H1 (cell line): ENCODE measurements at regions of chr20 and their contacts with region 1.

Region 1: DNA sequence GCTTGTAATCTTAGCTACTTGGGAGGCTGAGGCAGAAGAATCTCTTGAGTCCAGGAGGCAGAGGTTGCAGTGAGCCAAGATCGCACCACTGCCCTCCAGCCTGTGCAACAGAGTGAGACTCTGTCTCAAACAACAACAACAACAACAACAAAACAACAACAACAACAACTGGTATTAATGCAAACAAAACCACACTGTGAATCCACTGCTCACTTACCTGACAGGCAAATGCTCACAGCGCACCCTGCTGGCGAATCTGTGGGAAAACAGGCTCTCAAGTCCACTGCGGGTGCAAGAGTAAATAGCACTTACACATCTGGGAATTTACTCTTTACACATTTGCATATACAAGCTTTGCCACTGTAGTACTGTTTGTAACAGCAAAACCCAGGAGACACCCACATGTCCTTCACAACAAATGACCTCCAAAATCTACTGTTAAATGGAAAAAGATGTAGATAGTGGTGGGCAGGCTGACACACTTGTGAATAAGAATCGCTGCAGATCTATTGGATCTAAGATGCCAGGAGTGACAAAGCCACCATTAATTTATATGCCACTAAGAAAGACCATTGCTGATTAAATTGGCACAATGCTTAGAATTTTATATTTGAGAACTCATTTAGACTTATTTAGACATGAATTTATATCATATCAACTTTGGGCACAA is 29.3 kb downstream of the NSFL1C start:
- DNase-seq: peak in 1 of 2 experiments; percentile 80
- H3K4me3 ChIP-seq: no peak overlapping the region
- H3K27ac ChIP-seq: no peak overlapping the region
- H3K4me1 ChIP-seq: no peaks in the 10 kb centered on the region
- H3K27me3 ChIP-seq: no peaks in the 10 kb centered on the region
- CTCF ChIP-seq: peak; percentile 85 to 91 (median 87)
- EP300 ChIP-seq: no peak
- POLR2A ChIP-seq: no peak
- RAD21 ChIP-seq: peak; percentile 83 to 84

Region 2: GRCh38 chr20:1212607-1213396 is 224.6 kb before region 1 on chr20:
- CTCF ChIA-PET with region 1: no interaction called
- POLR2A ChIA-PET with region 1: no interaction called
- DNase-seq: peak; percentile 53 to 77
- H3K4me3 ChIP-seq: no peak overlapping the region
- H3K27ac ChIP-seq: no peak overlapping the region
- H3K4me1 ChIP-seq: peaks cover 0 to 10% (median 0%) of the 10 kb centered on the region in 4 experiments; a peak in 3 of 7 replicates
- H3K27me3 ChIP-seq: 0 out of 7 replicates have a peak, but pooled peaks cover 0 to 3% (median 0%) of the 10 kb centered on the region in 4 experiments
- CTCF ChIP-seq: peak; percentile 80 to 93 (median 85)
- EP300 ChIP-seq: no peak
- POLR2A ChIP-seq: no peak
- RAD21 ChIP-seq: peak; percentile 92

Region 3: GRCh38 chr20:1383623-1384404 is 53.6 kb before region 1 on chr20:
- CTCF ChIA-PET with region 1: interaction called, 23 read pairs
- POLR2A ChIA-PET with region 1: interaction called, 3 read pairs
- DNase-seq: no peak
- H3K4me3 ChIP-seq: no peak overlapping the region
- H3K27ac ChIP-seq: no peak overlapping the region
- H3K4me1 ChIP-seq: peaks cover 0 to 2% (median 0%) of the 10 kb centered on the region in 4 experiments; a peak in 2 of 7 replicates
- H3K27me3 ChIP-seq: no peaks in the 10 kb centered on the region
- CTCF ChIP-seq: no peak
- EP300 ChIP-seq: no peak
- POLR2A ChIP-seq: no peak
- RAD21 ChIP-seq: no peak

Region 4: GRCh38 chr20:1415667-1416468 is 21.5 kb before region 1 on chr20:
- CTCF ChIA-PET with region 1: interaction called, 139 read pairs
- POLR2A ChIA-PET with region 1: no interaction called
- DNase-seq: no peak
- H3K4me3 ChIP-seq: no peak overlapping the region
- H3K27ac ChIP-seq: no peak overlapping the region
- H3K4me1 ChIP-seq: peaks cover 0 to 3% (median under 1%) of the 10 kb centered on the region in 4 experiments; a peak in 4 of 7 replicates
- H3K27me3 ChIP-seq: 0 out of 7 replicates have a peak, but pooled peaks cover 0 to 3% (median 0%) of the 10 kb centered on the region in 4 experiments
- CTCF ChIP-seq: no peak
- EP300 ChIP-seq: no peak
- POLR2A ChIP-seq: no peak
- RAD21 ChIP-seq: no peak

Region 5: DNA sequence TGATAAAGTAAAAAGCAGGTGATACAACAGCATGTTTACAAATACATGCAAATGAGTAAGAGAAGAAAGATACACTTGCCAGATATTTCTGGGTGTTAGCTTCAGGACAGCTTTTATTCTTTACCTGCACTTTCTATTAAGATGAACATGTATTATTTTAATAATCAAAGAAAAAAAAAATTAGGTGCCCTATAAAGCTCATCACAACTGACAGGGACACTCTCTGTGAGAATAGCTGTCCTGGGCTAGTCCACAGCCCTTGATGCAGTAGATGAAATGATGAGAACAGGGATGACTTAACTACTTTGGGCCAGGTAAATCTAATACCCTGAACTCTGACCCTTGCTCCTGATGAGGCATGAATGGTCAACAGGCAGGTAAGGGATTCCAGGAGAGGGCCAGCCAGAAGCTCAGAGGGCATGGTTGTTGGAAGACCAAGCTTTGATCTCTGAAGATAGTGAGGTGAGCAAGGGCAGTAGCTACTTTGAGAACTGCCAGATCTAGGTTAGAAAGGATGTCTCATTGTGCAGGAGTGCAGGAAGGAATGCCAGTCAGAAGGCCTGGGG is 13.6 kb after region 1 on chr20:
- CTCF ChIA-PET with region 1: interaction called, 76 read pairs
- POLR2A ChIA-PET with region 1: interaction called, 4 read pairs
- DNase-seq: no peak
- H3K4me3 ChIP-seq: 0 out of 8 replicates have a peak overlapping the region, but pooled peaks of 1 of the 4 experiments have one; percentile 6
- H3K27ac ChIP-seq: no peak overlapping the region
- H3K4me1 ChIP-seq: no peaks in the 10 kb centered on the region
- H3K27me3 ChIP-seq: no peaks in the 10 kb centered on the region
- CTCF ChIP-seq: no peak
- EP300 ChIP-seq: no peak
- POLR2A ChIP-seq: no peak
- RAD21 ChIP-seq: no peak

Region 6: GRCh38 chr20:1466211-1467081 is 29.1 kb after region 1 on chr20 and contains the start of gene NSFL1C:
- CTCF ChIA-PET with region 1: interaction called, 53 read pairs
- POLR2A ChIA-PET with region 1: interaction called, 7 read pairs
- DNase-seq: peak; percentile 88 to 99
- H3K4me3 ChIP-seq: peak within 1 kb of the TSS; percentile 76 to 96 (median 94)
- H3K27ac ChIP-seq: peak within 1 kb of the TSS; percentile 77
- H3K4me1 ChIP-seq: peaks cover 3 to 14% (median 6%) of the 10 kb centered on the region in 4 experiments; a peak in 6 of 7 replicates
- H3K27me3 ChIP-seq: no peaks in the 10 kb centered on the region
- CTCF ChIP-seq: peak; percentile 83 to 94 (median 92)
- EP300 ChIP-seq: peak in 1 of 2 experiments; percentile 92; a peak in 2 of 3 replicates
- POLR2A ChIP-seq: peak; percentile 66 to 87
- RAD21 ChIP-seq: peak; percentile 34 to 55; a peak in 3 of 4 replicates
- total RNA-seq, gene NSFL1C: 87.4 and 98.0 TPM in 2 replicates